Activated T-helper 1 cell treated with anti-CD3 and anti-CD28 coated beads, Interleukin-12 subunit alpha, Interleukin-12 subunit beta, Interleukin-2, Interleukin-4 antibody, amounts not matched to agents 30 ng/mL and 10 ng/mL and 1 ng/mL, durations not matched to agents 14 hours and 24 hours and 36 hours (primary cell): ENCODE measurements at regions of chr1 and their contacts with region 1.

Region 1: DNA sequence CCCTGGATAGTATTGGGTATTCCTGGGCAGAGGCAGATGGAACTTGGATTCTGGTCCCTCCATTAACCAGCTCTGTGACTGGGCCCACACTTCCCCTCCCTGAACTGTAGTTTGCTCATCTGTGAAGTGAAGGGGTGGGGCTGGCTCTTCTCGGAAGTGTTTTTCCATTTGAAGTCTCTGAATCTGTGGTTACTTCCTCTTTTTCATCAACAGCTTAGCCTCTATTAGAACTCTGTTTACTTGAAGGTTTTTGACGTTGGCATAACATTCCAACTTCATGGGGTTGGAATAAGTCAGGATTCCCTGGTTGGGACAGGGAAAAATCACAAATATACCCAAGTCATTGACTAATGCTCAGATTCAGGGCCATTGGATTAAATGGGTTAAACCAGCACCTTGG is 3.6 kb downstream of the KIAA0040 start:
- DNase-seq: peak; percentile 60
- H3K4me3 Mint-ChIP-seq: peak overlapping the region; percentile 99
- H3K27ac Mint-ChIP-seq: peak overlapping the region; percentile 84
- H3K4me1 Mint-ChIP-seq: peaks cover 75% of the 10 kb centered on the region
- H3K27me3 Mint-ChIP-seq: no peaks in the 10 kb centered on the region

Region 2: GRCh38 chr1:175237389-175237788 is 48.5 kb after region 1 on chr1:
- intact Hi-C with region 1: loop called (anchors 2 kb)
- DNase-seq: no peak
- H3K4me3 Mint-ChIP-seq: peak overlapping the region; percentile 0
- H3K27ac Mint-ChIP-seq: peak overlapping the region; percentile 5
- H3K4me1 Mint-ChIP-seq: peaks cover 31% of the 10 kb centered on the region
- H3K27me3 Mint-ChIP-seq: no peaks in the 10 kb centered on the region

Region 3: DNA sequence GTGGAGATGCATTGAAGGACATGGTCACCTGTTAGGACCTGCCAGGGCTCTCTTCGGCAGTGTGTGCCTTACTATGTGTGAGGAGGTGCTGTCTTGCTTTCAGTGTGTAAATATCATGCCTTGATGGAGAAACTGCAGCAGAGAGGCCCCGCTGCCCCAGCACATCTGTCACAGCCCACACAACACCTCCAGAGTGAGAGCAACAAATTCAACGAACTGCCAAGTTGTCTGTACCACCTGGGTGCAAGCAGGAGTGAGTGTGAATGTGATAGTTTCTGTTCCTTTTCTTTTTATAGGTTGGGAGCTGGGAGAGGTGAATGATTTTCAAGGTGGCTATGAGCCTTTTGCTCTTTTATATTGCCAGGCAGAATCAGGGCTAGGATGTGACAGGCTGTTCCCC is 118.2 kb after region 1 on chr1:
- intact Hi-C with region 1: no loop called
- DNase-seq: no peak
- H3K4me3 Mint-ChIP-seq: no peak overlapping the region
- H3K27ac Mint-ChIP-seq: no peak overlapping the region
- H3K4me1 Mint-ChIP-seq: no peaks in the 10 kb centered on the region
- H3K27me3 Mint-ChIP-seq: peaks cover 31% of the 10 kb centered on the region

Region 4: DNA sequence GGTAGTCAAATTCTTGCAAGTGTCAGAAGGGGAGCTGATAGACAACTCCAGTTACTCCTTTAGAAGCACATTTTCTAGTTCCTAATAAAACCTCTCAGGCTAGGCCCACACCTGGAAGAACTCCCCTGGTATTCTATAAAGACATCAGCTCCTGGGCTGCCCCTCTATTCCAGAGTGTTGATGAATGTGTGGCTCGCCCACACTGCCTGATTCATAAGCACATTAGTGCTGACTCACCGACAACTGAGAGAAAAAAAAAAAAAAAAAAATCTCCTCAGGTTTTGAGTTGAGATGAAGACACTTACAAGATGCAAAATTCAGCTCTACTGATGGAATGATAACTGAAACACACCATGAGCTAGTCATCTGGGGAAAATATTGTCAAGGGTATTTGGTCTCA is 366.3 kb after region 1 on chr1:
- intact Hi-C with region 1: no loop called
- DNase-seq: no peak
- H3K4me3 Mint-ChIP-seq: no peak overlapping the region
- H3K27ac Mint-ChIP-seq: no peak overlapping the region
- H3K4me1 Mint-ChIP-seq: no peaks in the 10 kb centered on the region
- H3K27me3 Mint-ChIP-seq: peaks cover 11% of the 10 kb centered on the region